Transverse colon (tissue), 4 donors: ENCODE measurements at regions of chr3 and their contacts with region 1.

Region 1: GRCh38 chr3:73508330-73508954 is 116.3 kb downstream of the PDZRN3 start:
- DNase-seq: peak; percentile 54
- H3K4me3 ChIP-seq: no peak overlapping the region
- H3K27ac ChIP-seq: peak overlapping the region; percentile 77 to 86 (median 84)
- H3K4me1 ChIP-seq: peaks cover 19 to 73% (median 55%) of the 10 kb centered on the region in 4 donors
- H3K27me3 ChIP-seq: no peaks in the 10 kb centered on the region
- CTCF ChIP-seq: peak; percentile 71 to 81 (median 76)
- EP300 ChIP-seq: no peak
- POLR2A ChIP-seq: no peak

Region 2: DNA sequence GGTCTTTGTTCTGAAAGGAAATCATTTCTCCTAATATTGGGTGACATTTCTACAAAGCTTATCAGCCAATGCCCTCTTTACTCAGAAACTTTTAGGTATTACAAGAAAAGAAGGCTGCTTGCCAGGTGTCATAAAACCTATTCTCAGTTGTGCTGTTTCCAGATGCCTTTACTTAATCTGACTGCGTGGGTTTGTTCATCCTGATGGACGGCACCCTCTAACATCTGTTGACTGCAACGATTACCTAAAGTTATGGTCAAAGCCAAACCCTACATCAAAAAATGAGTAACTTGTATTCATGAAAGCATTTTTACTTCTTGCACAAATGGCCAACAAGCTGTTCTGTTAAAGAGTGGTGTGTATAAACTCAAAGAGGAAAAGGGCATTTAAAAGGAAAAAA is 324.0 kb after region 1 on chr3:
- in situ Hi-C with region 1: loop called in 2 of 4 experiments (anchors 25 kb)
- intact Hi-C with region 1: loop called (anchors 10 kb)
- DNase-seq: no peak
- H3K4me3 ChIP-seq: no peak overlapping the region
- H3K27ac ChIP-seq: no peak overlapping the region
- H3K4me1 ChIP-seq: peaks cover 9 to 16% (median 12%) of the 10 kb centered on the region in 4 donors
- H3K27me3 ChIP-seq: no peaks in the 10 kb centered on the region
- CTCF ChIP-seq: no peak
- EP300 ChIP-seq: no peak
- POLR2A ChIP-seq: no peak

Region 3: GRCh38 chr3:73848173-73848906 is 339.9 kb after region 1 on chr3:
- in situ Hi-C with region 1: loop called (anchors 10 to 25 kb)
- intact Hi-C with region 1: loop called (anchors 5 kb)
- DNase-seq: no peak
- H3K4me3 ChIP-seq: no peak overlapping the region
- H3K27ac ChIP-seq: no peak overlapping the region
- H3K4me1 ChIP-seq: no peaks in the 10 kb centered on the region
- H3K27me3 ChIP-seq: no peaks in the 10 kb centered on the region
- CTCF ChIP-seq: peak; percentile 61 to 72 (median 63)
- EP300 ChIP-seq: no peak
- POLR2A ChIP-seq: no peak